Left cardiac atrium (tissue), 4 donors: ENCODE measurements at regions of chr17 and their contacts with region 1.

Region 1: GRCh38 chr17:64117981-64118979 is 11.7 kb downstream of the ERN1 start:
- DNase-seq: peak; percentile 55
- ATAC-seq: peak in 1 of 2 donors; percentile 65

Region 2: DNA sequence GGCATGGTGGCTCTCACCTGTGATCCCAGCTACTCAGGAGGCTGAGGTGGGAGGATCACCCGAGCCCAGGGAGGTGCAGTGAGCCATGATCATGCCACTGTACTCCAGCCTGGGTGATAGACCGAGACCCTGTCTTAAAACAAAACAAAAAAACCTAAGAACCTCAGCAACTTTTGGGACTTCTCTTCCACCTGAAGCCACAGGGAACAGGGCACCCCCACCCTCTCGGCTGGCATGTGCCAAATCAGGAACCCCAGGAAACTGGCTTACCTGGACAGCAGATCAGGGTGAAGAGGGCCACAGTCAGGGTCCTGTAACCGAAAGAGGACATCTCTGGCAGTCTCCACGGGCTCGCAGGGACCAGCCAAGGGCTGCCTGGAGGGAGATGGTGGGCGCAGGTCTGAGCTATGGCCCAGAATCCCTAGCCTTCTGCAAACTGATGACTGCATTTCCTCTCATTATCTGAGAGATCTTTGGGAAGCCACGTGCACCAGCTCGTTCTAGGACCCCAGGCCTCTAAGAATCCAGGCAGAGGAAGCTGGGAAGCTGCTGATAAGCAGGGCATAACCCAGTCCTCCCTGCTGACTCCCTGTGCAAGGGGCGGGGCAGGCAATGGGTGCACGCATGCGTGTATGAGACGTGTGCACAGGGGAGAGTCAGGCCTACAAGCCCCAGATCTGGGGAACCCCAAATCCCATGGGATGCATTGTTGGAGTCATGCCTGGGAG is 111.8 kb before region 1 on chr17:
- intact Hi-C with region 1: no loop called
- DNase-seq: peak; percentile 82
- ATAC-seq: peak; percentile 76 to 80

Region 3: GRCh38 chr17:64056269-64057005 is 61.8 kb before region 1 on chr17:
- intact Hi-C with region 1: loop called in 1 of 2 experiments (anchors 10 kb)
- DNase-seq: no peak
- ATAC-seq: no peak

Region 4: GRCh38 chr17:64084940-64085649 is 33.2 kb before region 1 on chr17:
- intact Hi-C with region 1: loop called in 1 of 2 experiments (anchors 5 kb)
- DNase-seq: no peak
- ATAC-seq: no peak

Region 5: GRCh38 chr17:64270885-64271284 is 152.6 kb after region 1 on chr17:
- intact Hi-C with region 1: no loop called
- DNase-seq: no peak
- ATAC-seq: no peak

Region 6: DNA sequence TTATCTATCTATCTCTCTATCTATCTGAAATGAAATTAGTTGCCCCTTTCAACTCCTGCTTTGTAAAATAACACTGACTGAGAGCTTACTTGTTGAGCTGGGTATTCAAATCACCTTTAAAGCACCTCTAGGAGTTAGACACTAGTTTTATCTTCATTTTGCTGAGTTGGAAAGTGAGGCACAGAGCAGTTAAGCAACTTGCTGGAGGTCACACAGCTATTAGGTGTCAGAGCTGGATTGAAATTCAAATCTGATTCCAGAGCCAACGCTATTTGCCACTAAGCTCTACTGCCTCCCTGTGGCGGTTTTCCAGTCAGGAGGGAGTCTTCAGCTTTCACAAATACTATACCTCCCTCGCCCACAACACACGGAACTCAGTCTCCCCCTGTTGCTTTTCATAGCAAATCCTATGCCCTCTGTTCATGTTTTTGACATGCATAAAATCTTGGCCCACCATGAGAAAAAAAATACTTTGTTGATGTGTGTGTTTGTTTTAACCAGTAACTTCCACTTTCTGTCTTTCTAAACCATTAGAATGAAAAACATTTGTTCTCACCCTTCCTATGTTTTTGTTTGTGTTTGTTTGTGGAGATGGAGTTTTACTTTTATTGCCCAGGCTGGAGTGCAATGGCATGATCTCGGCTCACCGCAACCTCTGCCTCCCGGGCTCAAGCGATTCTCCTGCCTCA is 618.7 kb after region 1 on chr17:
- intact Hi-C with region 1: no loop called
- DNase-seq: peak; percentile 36
- ATAC-seq: peak; percentile 23 to 51